BJ (cell line): ENCODE measurements at regions of chr1 and their contacts with region 1.

Region 1: GRCh38 chr1:15430787-15431570 is 7.3 kb upstream of the CTRC start:
- DNase-seq: no peak
- H3K4me3 ChIP-seq: no peak overlapping the region
- H3K27me3 ChIP-seq: no peaks in the 10 kb centered on the region
- CTCF ChIP-seq: peak; percentile 95

Region 2: GRCh38 chr1:15304701-15305467 is 126.1 kb before region 1 on chr1:
- CTCF ChIA-PET with region 1: interaction called, 13 read pairs
- POLR2A ChIA-PET with region 1: no interaction called
- DNase-seq: no peak
- H3K4me3 ChIP-seq: no peak overlapping the region
- H3K27me3 ChIP-seq: no peaks in the 10 kb centered on the region; the same call in 1 of the 2 replicates
- CTCF ChIP-seq: peak; percentile 82

Region 3: DNA sequence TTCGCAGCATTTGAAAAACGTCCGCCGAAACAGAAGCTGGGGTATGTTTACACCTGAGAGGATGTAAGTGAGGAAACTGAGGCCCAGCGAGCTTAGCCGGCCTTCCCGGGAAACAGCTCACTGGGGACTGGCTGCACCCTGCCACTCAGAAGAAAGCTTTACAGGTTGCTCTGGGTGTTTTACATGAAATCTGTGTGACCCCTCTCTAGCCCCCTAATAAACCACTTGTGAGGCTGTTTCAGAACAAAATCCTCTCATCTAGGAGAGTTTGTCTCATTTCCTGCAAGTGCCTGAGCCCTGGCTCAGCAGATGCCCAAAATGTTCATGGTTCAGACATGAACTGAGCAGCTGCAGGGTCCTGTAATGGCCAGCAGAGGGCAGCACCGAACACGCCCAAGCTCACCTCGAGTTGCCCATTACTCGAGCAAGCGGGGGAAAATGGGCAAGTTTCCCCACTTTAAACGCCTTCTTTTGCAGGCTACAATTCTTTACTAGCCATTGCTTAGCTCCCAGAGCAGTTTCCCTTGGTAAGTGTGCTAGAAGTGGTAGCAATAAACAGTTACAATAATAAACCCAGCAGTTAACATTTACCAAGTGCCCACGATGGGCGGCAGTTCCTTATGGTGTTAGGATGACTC is 107.5 kb before region 1 on chr1:
- CTCF ChIA-PET with region 1: interaction called, 242 read pairs
- POLR2A ChIA-PET with region 1: no interaction called
- DNase-seq: no peak
- H3K4me3 ChIP-seq: no peak overlapping the region
- H3K27me3 ChIP-seq: peaks cover 1% of the 10 kb centered on the region; the same call in 1 of the 2 replicates
- CTCF ChIP-seq: peak; percentile 97

Region 4: GRCh38 chr1:15337656-15338402 is 93.2 kb before region 1 on chr1:
- CTCF ChIA-PET with region 1: interaction called, 19 read pairs
- POLR2A ChIA-PET with region 1: no interaction called
- DNase-seq: peak; percentile 39
- H3K4me3 ChIP-seq: no peak overlapping the region
- H3K27me3 ChIP-seq: no peaks in the 10 kb centered on the region
- CTCF ChIP-seq: no peak

Region 5: GRCh38 chr1:15384301-15384901 is 46.6 kb before region 1 on chr1:
- CTCF ChIA-PET with region 1: no interaction called
- POLR2A ChIA-PET with region 1: no interaction called
- DNase-seq: no peak
- H3K4me3 ChIP-seq: no peak overlapping the region
- H3K27me3 ChIP-seq: peaks cover 5% of the 10 kb centered on the region; the same call in 1 of the 2 replicates
- CTCF ChIP-seq: no peak

Region 6: GRCh38 chr1:15418806-15419515 is 12.0 kb before region 1 on chr1:
- CTCF ChIA-PET with region 1: interaction called, 36 read pairs
- POLR2A ChIA-PET with region 1: no interaction called
- DNase-seq: no peak
- H3K4me3 ChIP-seq: no peak overlapping the region
- H3K27me3 ChIP-seq: no peaks in the 10 kb centered on the region
- CTCF ChIP-seq: no peak